Activated CD4-positive, alpha-beta memory T cell treated with anti-CD3 and anti-CD28 coated beads for 36 hours (primary cell): ENCODE measurements at regions of chr9 and their contacts with region 1.

Region 1: DNA sequence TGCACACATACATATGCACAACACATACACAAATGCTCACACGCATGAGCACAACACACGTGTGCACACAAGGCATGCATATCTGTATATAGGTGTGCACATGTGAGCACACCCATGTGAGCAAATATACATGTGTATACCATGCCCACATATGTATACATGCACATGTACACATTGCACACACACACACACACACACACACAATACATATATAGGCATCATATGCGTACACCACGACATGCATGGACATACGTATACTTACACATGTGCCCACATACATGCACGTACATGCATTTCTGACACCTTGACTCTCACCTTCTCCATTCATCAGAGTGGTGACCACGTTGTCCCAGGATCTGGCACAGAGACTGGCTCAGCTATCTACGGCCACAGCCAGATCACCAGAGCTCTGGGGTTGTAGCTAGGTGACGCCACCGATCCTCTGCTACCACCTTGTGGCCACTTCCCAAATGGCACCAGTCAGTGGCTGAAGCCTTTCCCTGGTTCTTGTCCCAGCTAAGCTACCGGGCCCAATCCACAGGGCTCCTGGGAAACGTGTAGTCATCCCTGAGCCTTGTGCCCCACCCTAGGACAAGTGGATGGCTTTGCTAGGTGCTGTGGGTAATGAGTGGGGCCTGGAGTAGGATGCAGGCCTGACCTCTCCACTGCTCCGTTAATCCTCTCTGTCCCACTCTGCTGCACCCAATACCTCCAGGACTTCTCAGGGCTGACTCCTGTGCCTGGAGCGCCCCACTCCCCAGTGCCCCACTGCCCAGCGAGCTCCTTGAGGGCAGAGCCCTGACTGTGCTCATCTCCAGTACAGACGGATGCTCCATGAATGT is 194.4 kb downstream of the RGS3 start:
- DNase-seq: peak; percentile 87
- H3K4me3 Mint-ChIP-seq: no peak overlapping the region
- H3K27ac Mint-ChIP-seq: no peak overlapping the region
- H3K4me1 Mint-ChIP-seq: peaks cover 6% of the 10 kb centered on the region
- H3K27me3 Mint-ChIP-seq: peaks cover 4% of the 10 kb centered on the region

Region 2: DNA sequence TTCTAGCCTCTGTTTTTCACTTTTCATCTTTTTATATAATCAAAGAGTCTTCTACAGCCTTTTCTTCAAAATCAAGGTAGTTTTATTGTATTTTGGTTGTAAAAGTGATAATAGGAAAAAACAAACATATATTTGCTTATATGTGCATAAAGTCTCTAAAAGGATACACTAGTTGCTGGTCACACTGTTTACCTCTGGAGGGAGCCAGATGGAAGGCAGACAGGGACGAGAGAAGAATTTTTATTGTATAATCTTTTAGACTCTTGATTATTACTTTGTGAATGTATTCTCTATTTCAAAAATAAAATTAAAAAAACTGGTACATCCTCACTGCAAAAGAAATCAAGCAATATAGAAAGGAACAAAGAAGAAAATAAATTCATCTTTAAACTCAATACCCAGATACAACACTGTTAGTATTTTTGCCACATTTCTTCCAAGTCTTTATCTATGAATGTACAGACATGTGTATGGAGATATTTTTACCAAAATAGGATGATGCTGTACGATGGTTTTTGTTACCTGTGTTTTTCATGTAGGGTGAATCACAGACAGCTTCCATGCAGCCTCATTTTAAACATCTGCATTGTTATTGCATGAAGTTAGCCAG is 348.6 kb before region 1 on chr9:
- CTCF ChIA-PET with region 1: interaction called, 9 read pairs
- POLR2A ChIA-PET with region 1: no interaction called
- intact Hi-C with region 1: loop called (anchors 10 kb)
- DNase-seq: peak; percentile 32
- H3K4me3 Mint-ChIP-seq: no peak overlapping the region
- H3K27ac Mint-ChIP-seq: no peak overlapping the region
- H3K4me1 Mint-ChIP-seq: no peaks in the 10 kb centered on the region
- H3K27me3 Mint-ChIP-seq: peaks cover 3% of the 10 kb centered on the region

Region 3: GRCh38 chr9:113446323-113446740 is 211.6 kb before region 1 on chr9:
- CTCF ChIA-PET with region 1: interaction called, 250 read pairs
- POLR2A ChIA-PET with region 1: no interaction called
- intact Hi-C with region 1: loop called (anchors 2 kb)
- DNase-seq: no peak
- H3K4me3 Mint-ChIP-seq: no peak overlapping the region
- H3K27ac Mint-ChIP-seq: peak overlapping the region; percentile 55
- H3K4me1 Mint-ChIP-seq: no peaks in the 10 kb centered on the region
- H3K27me3 Mint-ChIP-seq: no peaks in the 10 kb centered on the region

Region 4: DNA sequence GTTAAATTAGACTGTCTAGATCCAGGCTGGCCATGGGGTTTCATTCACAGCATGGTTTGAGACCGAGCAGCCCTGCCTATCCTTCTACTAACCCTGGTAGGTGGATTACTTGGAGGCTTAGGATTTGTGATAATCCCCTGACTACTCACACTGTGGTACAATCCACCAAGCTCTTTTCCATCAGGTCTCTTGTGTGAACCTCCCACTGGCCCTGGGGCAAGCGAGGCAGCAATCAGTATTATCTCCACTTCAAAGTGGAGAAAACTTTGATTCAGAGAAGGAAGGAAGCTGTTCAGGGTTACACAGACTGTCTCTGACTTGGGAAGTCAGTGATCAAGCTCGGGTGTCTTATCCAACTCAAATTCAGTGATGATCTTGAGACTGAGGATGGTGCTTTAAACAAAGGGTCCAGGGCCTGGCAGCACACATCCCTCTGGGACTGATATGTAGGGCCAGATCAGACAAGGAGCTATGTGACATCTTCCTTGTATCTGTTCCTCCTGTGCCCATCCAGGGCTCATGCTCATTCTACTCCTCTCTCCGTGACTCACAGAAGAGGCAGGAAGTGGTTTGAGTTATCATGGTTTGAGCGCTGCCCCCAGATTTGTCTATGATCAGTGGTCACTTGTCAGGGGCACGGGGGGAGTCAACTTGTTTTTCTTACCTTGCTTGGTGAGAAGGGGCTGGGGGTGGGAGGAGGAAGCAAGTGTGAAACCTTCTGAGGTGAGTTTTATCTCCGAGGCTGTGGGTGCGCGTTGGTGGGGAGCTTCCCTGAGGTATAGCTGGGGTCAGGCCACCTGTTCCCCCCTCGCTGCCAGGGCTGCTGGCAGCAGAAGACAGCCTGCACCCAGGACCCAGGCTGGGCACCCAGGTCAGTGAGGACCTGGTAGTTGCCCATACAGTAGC is 145.8 kb before region 1 on chr9:
- CTCF ChIA-PET with region 1: interaction called, 37 read pairs
- POLR2A ChIA-PET with region 1: no interaction called
- intact Hi-C with region 1: loop called (anchors 5 kb)
- DNase-seq: peak; percentile 89
- H3K4me3 Mint-ChIP-seq: peak overlapping the region; percentile 52
- H3K27ac Mint-ChIP-seq: peak overlapping the region; percentile 91
- H3K4me1 Mint-ChIP-seq: peaks cover 52% of the 10 kb centered on the region
- H3K27me3 Mint-ChIP-seq: peaks cover 2% of the 10 kb centered on the region

Region 5: DNA sequence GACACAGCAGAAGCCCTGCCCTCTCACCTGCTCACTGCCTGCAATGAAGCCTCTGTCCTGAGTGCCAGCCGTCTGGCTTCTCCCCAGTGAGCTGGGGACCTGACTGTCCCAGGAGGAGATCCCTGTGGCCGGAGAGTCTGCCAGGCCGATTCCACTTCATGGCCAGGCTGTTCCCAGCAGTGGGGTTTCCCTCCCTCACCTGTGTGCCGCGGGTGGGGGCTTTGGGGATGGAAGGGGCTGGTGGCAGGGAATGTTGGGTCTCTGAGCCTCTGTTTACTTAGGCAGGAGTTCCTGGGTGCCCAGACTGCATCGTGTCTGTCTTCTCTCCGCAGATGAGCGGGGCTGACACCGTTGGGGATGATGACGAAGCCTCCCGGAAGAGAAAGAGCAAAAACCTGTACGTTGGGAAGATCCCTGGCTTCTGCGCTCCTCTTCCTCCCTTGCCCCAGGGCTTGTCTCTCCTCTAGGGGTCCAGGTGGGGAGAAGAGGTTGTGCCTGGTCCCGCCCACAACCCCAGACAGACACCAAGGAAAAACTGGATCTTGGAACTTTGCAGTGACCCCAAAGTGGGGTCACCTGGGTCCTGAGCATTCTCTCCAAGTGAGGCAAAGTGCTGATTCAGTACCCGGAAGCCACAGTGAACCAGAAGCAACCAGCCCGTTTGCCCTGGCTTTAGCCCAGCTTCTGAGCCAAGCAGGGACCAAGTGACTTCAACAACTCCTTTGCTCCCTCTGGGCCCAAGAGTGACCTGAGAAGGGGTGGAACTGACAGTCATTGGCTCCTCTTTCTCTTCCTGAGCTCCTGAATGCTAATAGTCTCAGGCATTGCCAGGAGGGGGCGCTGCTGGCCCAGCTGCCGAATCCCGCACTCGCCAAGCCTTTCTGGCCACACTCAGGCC is 66.7 kb before region 1 on chr9:
- CTCF ChIA-PET with region 1: interaction called, 580 read pairs
- POLR2A ChIA-PET with region 1: interaction called, 20 read pairs
- intact Hi-C with region 1: loop called (anchors 1 kb)
- DNase-seq: peak; percentile 86
- H3K4me3 Mint-ChIP-seq: no peak overlapping the region
- H3K27ac Mint-ChIP-seq: no peak overlapping the region
- H3K4me1 Mint-ChIP-seq: peaks cover 41% of the 10 kb centered on the region
- H3K27me3 Mint-ChIP-seq: no peaks in the 10 kb centered on the region

Region 6: GRCh38 chr9:113632776-113633590 is 24.9 kb before region 1 on chr9:
- CTCF ChIA-PET with region 1: interaction called, 72 read pairs
- POLR2A ChIA-PET with region 1: no interaction called
- intact Hi-C with region 1: no loop called
- DNase-seq: peak; percentile 69
- H3K4me3 Mint-ChIP-seq: no peak overlapping the region
- H3K27ac Mint-ChIP-seq: no peak overlapping the region
- H3K4me1 Mint-ChIP-seq: peaks cover 6% of the 10 kb centered on the region
- H3K27me3 Mint-ChIP-seq: peaks cover 10% of the 10 kb centered on the region

Region 7: GRCh38 chr9:114397848-114398605 is 740.1 kb after region 1 on chr9:
- CTCF ChIA-PET with region 1: no interaction called
- POLR2A ChIA-PET with region 1: no interaction called
- intact Hi-C with region 1: no loop called
- DNase-seq: peak; percentile 97
- H3K4me3 Mint-ChIP-seq: peak overlapping the region; percentile 95
- H3K27ac Mint-ChIP-seq: peak overlapping the region; percentile 90
- H3K4me1 Mint-ChIP-seq: peaks cover 44% of the 10 kb centered on the region
- H3K27me3 Mint-ChIP-seq: no peaks in the 10 kb centered on the region